ENCODE measurements at regions of chr3 and their contacts with region 1.

Region 1: DNA sequence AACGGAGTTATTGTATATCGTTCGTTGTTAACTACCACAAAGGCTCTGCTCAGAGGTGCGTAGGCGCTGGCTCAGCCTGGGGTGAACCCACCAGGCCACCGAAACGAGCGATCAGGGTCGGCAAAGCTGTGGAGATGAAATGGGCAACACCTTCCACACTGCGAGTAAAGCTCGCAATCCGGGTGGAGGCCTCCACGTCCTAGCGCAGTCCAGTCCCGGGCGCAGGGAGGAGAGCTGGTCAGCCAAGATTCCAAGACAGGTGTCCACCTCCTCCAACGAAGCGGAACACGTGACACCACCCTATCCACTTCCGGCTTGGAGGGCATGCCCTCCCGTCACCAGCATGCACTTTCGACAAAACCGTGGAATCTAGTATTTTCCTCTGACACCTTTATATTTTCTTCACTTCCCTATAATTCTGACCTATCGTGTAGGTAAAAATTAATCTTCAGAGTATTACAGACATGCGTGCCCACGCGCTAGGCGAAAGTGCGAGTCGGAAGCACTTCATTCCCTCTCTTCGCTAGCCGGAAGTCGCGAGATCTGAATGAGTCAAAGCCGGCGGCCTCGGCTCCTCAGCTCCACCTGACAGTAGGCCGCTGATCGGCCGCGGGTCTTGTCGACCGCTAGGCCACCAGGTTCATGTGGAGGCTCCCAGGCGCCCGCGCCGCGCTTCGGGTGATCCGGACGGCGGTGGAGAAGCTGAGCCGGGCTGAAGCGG is at the start of gene PDE12:
- DNase-seq: peak; percentile 86 to 95 (median 92)
- H3K4me3 ChIP-seq: peak within 1 kb of the TSS; percentile 30 to 99 (median 89)
- H3K27ac ChIP-seq: peak within 1 kb of the TSS; percentile 85 to 97 (median 95)
- H3K4me1 ChIP-seq: peaks cover 14 to 41% of the 10 kb centered on the region in 2 donors
- H3K27me3 ChIP-seq: no peaks in the 10 kb centered on the region
- CTCF ChIP-seq: no peak
- POLR2A ChIP-seq: peak; percentile 90 to 93
- total RNA-seq, gene PDE12: 19.4 to 42.3 (median 28.5) TPM

Region 2: DNA sequence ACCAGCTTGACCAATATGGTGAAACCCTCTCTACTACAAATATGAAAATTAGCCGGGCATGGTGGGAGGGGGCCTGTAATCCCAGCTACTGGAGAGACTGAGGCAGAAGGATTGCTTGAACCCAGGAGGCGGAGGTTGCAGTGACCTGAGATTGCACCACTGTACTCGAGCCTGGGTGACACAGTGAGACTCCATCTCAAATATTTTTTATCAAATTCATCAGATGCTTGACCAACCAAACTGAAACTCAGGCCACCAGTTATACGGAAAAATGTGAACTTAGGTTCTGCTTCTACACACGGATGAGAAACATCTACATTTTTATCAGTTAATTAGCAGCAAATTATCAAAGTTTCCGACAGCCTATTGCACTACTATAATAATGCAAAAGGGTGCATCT is 36.4 kb after region 1 on chr3:
- intact Hi-C with region 1: loop called (anchors 5 kb)
- DNase-seq: no peak
- H3K4me3 ChIP-seq: no peak overlapping the region
- H3K27ac ChIP-seq: peak overlapping the region in 1 of 5 donors; percentile 21
- H3K4me1 ChIP-seq: peaks cover 43 to 57% of the 10 kb centered on the region in 2 donors
- H3K27me3 ChIP-seq: no peaks in the 10 kb centered on the region
- CTCF ChIP-seq: no peak
- POLR2A ChIP-seq: no peak

Region 3: GRCh38 chr3:57597122-57597923 is 41.4 kb after region 1 on chr3 and contains the start of gene ARF4:
- intact Hi-C with region 1: loop called (anchors 5 kb)
- DNase-seq: peak; percentile 99 to 100 (median 99)
- H3K4me3 ChIP-seq: peak within 1 kb of the TSS; percentile 48 to 96 (median 72)
- H3K27ac ChIP-seq: peak within 1 kb of the TSS; percentile 96 to 100 (median 98)
- H3K4me1 ChIP-seq: peaks cover 44 to 51% of the 10 kb centered on the region in 2 donors
- H3K27me3 ChIP-seq: no peaks in the 10 kb centered on the region
- CTCF ChIP-seq: peak in 1 of 6 experiments; percentile 8
- POLR2A ChIP-seq: peak; percentile 99 to 100
- total RNA-seq, gene ARF4: 112 to 283 (median 169) TPM